Psoas muscle (tissue), 8 donors: ENCODE measurements at regions of chr19 and their contacts with region 1.

Region 1: DNA sequence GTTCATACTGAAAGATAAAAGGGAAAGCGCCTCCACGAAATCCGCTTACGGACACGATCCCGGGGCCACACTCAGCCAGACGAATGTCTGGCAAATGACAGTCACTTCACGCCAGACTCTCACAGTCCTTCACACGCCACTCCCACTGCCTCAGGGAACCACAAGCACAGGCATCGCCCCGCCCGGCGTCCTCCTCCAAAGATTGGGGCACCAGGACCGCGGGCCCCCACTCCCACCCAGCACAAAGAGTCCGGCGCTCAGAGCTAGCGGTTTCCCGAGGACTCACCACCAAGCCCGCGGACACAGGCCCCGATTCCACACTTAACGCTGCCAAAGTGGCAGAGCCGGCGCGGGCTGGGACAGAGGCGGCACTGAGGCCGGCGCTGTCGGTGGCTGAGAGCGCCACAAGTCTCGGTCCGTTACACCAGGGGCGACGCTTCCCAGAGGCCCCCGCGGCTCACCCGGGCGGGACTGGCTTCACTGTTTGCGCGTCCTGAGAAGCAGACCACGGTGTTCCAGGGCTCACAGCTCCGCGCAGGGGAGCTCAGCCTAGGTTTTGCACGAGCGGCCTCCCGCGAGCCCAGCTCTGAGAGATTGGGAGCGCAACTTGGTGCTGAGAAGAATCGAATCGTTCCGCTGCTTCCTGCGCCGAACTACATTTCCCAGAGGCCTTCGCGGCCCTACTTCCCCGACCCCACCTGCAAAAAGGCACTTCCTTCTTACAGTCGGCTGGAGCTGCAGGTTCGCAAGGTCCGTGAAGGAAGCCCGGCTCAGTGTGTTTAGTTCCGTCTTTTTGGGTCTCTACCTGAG is at the start of gene ZNF569:
- DNase-seq: peak; percentile 89 to 94
- ATAC-seq: peak; percentile 87 to 91 (median 90)
- H3K4me3 ChIP-seq: peak within 1 kb of the TSS; percentile 93
- H3K27ac ChIP-seq: peak within 1 kb of the TSS; percentile 91
- H3K4me1 ChIP-seq: peaks cover 9% of the 10 kb centered on the region
- H3K27me3 ChIP-seq: no peaks in the 10 kb centered on the region
- CTCF ChIP-seq: no peak
- total RNA-seq, gene ZNF569: 3.3 to 5.3 (median 3.8) TPM

Region 2: DNA sequence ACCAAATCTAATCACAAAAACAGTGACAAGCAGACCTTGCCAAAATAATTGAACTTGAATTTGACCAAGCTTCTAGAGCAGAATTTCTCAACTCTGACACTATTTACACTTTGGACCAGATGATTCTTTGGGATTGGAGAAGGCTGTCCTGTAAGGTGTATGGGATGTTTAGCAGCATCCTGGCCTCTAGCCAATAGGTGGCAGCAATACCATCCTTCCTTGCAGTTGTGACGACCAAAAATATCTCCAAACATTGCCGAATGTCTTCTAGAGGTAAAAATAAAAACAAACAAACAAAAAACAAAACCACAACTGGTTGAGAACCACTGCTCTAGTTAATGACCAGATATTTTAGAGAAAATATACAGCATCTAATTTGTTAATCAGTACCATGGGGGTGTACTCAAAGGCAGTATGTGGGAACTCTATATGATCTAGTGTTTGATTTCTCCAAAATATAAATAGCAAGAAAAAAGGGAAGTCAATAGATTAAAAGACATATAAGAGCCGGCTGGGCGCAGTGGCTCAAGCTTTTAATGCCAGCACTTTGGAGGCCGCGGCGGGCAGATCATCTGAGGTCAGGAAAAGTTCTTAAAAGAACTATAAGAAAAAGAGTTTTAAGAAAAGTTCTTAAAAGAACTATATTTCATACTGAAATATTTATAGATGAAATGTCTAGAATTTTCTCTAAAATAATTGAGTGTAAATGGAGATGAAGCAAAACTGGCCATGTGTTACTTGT is 157.0 kb before region 1 on chr19:
- intact Hi-C with region 1: loop called in 1 of 2 experiments (anchors 10 kb)
- DNase-seq: no peak
- ATAC-seq: no peak
- H3K4me3 ChIP-seq: no peak overlapping the region
- H3K27ac ChIP-seq: no peak overlapping the region
- H3K4me1 ChIP-seq: no peaks in the 10 kb centered on the region
- H3K27me3 ChIP-seq: peaks cover 0 to 2% (median 0%) of the 10 kb centered on the region in 3 donors
- CTCF ChIP-seq: no peak

Region 3: DNA sequence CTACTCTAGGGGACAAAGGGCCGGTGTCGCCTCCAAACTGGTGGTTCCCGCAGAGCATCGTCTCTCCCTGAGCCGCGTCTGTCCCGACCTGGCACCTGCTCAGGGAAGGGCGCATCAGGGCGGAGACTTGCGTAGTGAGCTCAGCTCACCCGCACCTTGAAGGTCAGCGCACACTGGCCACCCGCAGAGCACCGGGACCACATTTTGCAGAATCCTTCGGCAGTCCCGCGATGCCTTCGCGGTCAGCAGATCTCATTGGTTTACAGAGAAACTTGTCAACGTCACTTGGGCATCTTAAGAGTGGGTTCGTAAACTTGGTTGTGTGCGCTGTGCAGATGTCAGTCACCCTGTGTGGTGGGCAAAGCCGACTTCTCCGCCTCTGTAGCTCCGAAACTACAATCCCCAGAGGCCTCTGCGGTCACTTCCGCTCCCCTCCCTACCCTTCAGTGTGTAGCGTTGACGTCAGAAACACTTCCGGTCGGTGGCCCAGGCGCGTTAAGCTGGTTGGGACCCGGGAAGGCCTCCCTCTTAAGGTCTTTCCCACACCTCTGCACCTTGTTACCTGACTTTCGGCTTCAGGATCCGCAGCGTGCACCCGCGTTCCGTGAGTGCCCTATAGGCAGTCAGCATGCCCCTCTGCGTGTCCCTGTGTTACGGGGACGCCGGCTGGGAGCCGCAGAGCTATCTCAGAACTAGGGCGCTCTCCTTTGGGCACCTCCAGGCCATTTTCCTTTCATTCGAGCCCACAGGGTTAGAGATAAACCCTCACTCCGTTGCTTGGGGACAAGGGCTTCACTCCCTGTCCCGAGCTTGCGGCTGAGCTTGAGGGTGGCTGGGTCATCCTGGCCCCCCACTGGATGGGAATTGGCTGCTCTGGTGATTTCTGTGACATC is 132.6 kb before region 1 on chr19:
- intact Hi-C with region 1: loop called in 1 of 2 experiments (anchors 10 kb)
- DNase-seq: peak; percentile 90 to 95
- ATAC-seq: peak; percentile 98 to 100 (median 100)
- H3K4me3 ChIP-seq: peak overlapping the region; percentile 76
- H3K27ac ChIP-seq: peak overlapping the region; percentile 90
- H3K4me1 ChIP-seq: peaks cover 12% of the 10 kb centered on the region
- H3K27me3 ChIP-seq: no peaks in the 10 kb centered on the region
- CTCF ChIP-seq: no peak

Region 4: DNA sequence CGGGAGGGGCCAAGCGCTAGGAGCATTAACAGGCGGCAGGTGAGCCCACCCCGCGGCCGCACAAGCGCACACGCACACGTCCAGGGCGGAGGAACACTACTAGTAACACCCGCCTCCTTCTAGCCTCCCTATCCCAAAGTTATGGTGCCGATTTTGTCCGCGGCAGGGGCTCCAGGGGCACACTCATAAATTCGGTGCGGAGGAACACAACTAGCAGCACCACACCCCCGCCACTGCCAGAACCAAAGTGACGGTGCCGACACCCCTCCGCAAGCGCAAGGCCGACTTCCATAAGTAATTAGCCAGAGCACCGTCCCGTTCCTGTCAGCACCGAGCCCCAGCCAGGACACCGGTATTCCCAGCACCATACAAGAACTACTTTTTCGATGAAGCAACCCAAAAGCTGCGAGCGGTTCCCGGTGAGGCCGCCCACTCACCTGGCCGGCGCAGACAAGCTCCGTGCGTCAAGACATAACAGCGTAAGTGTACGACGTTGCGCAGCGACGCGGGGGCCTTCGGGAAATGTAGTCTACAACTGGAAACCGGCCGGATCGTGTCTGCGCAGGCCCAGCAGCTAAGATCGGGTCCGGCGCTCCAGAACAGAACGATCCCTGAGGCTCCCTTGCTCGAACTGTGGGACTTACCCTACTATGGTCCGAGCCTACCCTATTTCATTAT is 127.4 kb after region 1 on chr19 and contains the starts of genes ZNF540 and ZNF571:
- intact Hi-C with region 1: loop called in 1 of 2 experiments (anchors 10 kb)
- DNase-seq: peak; percentile 93 to 95
- ATAC-seq: peak; percentile 99 to 100 (median 99)
- H3K4me3 ChIP-seq: peak within 1 kb of the TSS; percentile 78
- H3K27ac ChIP-seq: peak within 1 kb of the TSS; percentile 82
- H3K4me1 ChIP-seq: peaks cover 16% of the 10 kb centered on the region
- H3K27me3 ChIP-seq: no peaks in the 10 kb centered on the region
- CTCF ChIP-seq: no peak
- total RNA-seq, gene ZNF540: 0.27 to 4.9 (median 1.4) TPM
- total RNA-seq, gene ZNF571: 1.3 to 2.4 (median 1.8) TPM

Region 5: DNA sequence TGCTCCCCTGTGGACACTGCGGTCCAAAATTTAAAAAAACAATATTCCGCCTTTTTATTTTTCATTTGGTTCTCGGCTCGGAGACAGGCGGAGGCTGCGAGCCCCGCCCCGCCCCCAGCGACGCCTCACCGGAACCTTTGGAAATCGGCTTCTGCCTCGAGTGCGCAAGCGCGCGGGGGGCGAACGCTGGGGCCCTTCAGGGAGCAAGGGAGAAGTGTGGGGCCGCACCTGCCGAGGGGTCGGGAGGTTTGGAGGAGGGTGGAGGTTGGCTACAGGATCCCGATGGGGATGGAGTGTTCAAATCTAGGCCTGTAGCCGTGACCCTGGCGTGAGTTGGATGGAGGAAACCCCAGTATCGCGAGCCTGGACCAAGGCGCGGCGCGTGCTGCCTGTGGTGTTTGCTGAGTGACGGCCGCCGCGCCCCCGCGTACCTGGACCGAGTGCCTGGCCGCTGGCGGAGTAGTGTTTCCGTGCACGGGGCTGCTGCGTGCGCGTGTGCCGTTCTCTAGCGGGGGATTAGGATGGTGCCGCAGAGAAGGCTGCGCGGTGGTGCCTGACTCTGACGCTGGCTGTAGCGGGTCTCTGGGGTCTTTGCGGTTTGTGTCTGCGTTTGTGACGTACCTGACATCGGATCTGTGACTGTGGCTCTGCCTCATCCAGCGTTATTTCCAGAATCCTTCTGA is 188.8 kb after region 1 on chr19:
- intact Hi-C with region 1: loop called in 1 of 2 experiments (anchors 5 kb)
- DNase-seq: peak; percentile 87 to 92
- ATAC-seq: peak; percentile 88 to 93 (median 90)
- H3K4me3 ChIP-seq: peak overlapping the region; percentile 75
- H3K27ac ChIP-seq: peak overlapping the region; percentile 90
- H3K4me1 ChIP-seq: peaks cover 15% of the 10 kb centered on the region
- H3K27me3 ChIP-seq: no peaks in the 10 kb centered on the region
- CTCF ChIP-seq: no peak